Sciatic nerve (tissue), 2 donors: ENCODE measurements at regions of chr7 and their contacts with region 1.

Region 1: GRCh38 chr7:80257756-80258155 is 123.1 kb downstream of the GNAI1 start:
- DNase-seq: no peak
- ATAC-seq: no peak

Region 2: DNA sequence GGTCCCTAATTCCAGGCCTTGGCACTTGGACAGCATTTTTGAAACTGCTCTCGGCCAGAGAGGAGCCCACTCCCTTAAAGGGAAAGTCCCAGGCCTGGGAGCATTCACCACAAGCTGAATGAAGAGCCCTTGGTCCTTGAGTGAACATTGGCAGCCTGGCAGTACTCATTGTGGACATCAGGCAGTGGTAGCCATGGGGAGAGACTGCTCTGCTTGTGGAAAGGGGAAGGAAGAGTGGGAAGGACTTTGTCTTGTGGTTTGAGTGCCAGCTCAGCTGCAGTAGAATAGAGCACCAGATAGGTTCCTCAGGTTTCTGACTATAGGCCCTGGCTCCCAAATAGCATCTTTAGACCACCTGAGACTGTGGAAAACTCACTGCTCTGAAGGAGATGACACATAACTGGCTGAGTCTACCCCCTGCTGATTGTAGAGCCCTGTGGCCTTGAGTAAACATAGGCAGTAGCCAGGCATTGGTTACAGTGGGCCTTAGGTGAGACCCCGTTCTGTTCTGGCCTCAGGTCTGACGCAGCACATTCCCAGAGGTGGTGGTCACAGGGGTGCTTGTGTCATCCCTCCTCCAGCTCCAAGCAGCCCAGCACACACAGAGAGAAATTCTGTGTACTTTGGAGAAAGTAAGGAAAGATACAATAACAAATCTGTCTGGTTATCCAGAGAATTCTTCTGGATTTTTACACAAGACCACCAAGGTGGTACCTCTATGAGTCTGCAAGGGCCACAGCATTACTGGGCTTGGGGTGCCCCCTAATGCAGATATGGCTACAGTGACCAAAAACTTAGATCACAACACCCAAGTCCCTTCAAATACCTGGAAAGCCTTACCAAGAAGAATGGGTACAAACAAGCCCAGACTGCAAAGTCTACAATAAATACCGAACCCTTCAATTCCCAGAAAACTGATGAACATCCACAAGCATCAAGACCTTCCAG is 30.7 kb after region 1 on chr7:
- intact Hi-C with region 1: loop called (anchors 1 kb)
- DNase-seq: no peak
- ATAC-seq: peak; percentile 30